ENCODE measurements at regions of chr9 and their contacts with region 1.

Region 1: GRCh38 chr9:95127249-95128176 is 190.0 kb downstream of the FANCC start:
- DNase-seq: peak; percentile 90
- ATAC-seq: peak; percentile 82
- H3K4me3 Mint-ChIP-seq: peak overlapping the region; percentile 63
- H3K27ac Mint-ChIP-seq: no peak overlapping the region
- H3K4me1 Mint-ChIP-seq: peaks cover 70% of the 10 kb centered on the region
- H3K27me3 Mint-ChIP-seq: no peaks in the 10 kb centered on the region
- CTCF ChIP-seq: peak; percentile 87

Region 2: GRCh38 chr9:94672811-94673487 is 454.6 kb before region 1 on chr9:
- CTCF ChIA-PET with region 1: interaction called, 20 read pairs
- POLR2A ChIA-PET with region 1: no interaction called
- DNase-seq: no peak
- ATAC-seq: no peak
- H3K4me3 Mint-ChIP-seq: no peak overlapping the region
- H3K27ac Mint-ChIP-seq: no peak overlapping the region
- H3K4me1 Mint-ChIP-seq: no peaks in the 10 kb centered on the region
- H3K27me3 Mint-ChIP-seq: no peaks in the 10 kb centered on the region
- CTCF ChIP-seq: no peak

Region 3: GRCh38 chr9:95025213-95026147 is 102.0 kb before region 1 on chr9:
- CTCF ChIA-PET with region 1: interaction called, 10 read pairs
- POLR2A ChIA-PET with region 1: no interaction called
- DNase-seq: no peak
- ATAC-seq: peak; percentile 58; the same call in 1 of the 2 replicates
- H3K4me3 Mint-ChIP-seq: no peak overlapping the region
- H3K27ac Mint-ChIP-seq: no peak overlapping the region
- H3K4me1 Mint-ChIP-seq: peaks cover 8% of the 10 kb centered on the region
- H3K27me3 Mint-ChIP-seq: no peaks in the 10 kb centered on the region
- CTCF ChIP-seq: no peak

Region 4: GRCh38 chr9:95073021-95073607 is 54.4 kb before region 1 on chr9:
- CTCF ChIA-PET with region 1: interaction called, 16 read pairs
- POLR2A ChIA-PET with region 1: no interaction called
- DNase-seq: peak; percentile 47
- ATAC-seq: peak; percentile 91
- H3K4me3 Mint-ChIP-seq: no peak overlapping the region
- H3K27ac Mint-ChIP-seq: no peak overlapping the region
- H3K4me1 Mint-ChIP-seq: peaks cover 30% of the 10 kb centered on the region
- H3K27me3 Mint-ChIP-seq: no peaks in the 10 kb centered on the region
- CTCF ChIP-seq: no peak

Region 5: DNA sequence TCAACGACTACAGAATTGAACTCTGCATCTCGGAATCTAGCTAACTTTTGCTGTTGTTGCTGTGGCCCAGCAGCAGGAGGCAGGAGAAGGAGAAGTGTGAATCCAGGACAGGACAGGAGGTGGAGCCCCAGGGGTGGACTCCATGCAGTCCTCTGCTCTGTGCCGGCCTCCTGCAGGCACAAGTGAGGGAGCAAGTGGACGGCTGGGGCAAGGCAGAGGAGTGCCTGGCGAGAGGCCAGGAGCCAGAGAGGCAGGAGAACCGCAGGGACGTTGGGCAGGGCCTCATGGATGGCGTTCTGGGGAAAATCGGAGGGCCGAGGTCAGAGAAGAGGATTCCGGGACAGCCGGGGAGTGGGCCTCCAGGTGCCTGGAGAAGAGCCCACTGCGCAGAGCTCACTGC is 24.1 kb before region 1 on chr9:
- CTCF ChIA-PET with region 1: interaction called, 39 read pairs
- POLR2A ChIA-PET with region 1: no interaction called
- DNase-seq: peak; percentile 39
- ATAC-seq: peak; percentile 75
- H3K4me3 Mint-ChIP-seq: no peak overlapping the region
- H3K27ac Mint-ChIP-seq: peak overlapping the region; percentile 43
- H3K4me1 Mint-ChIP-seq: peaks cover 14% of the 10 kb centered on the region
- H3K27me3 Mint-ChIP-seq: no peaks in the 10 kb centered on the region
- CTCF ChIP-seq: no peak

Region 6: GRCh38 chr9:95143591-95144561 is 16.4 kb after region 1 on chr9:
- CTCF ChIA-PET with region 1: interaction called, 26 read pairs
- POLR2A ChIA-PET with region 1: no interaction called
- DNase-seq: no peak
- ATAC-seq: no peak
- H3K4me3 Mint-ChIP-seq: no peak overlapping the region
- H3K27ac Mint-ChIP-seq: peak overlapping the region; percentile 28; the same call in 1 of the 2 replicates
- H3K4me1 Mint-ChIP-seq: peaks cover 29% of the 10 kb centered on the region
- H3K27me3 Mint-ChIP-seq: no peaks in the 10 kb centered on the region
- CTCF ChIP-seq: no peak